PC-9 (cell line): ENCODE measurements at regions of chr10 and their contacts with region 1.

Region 1: DNA sequence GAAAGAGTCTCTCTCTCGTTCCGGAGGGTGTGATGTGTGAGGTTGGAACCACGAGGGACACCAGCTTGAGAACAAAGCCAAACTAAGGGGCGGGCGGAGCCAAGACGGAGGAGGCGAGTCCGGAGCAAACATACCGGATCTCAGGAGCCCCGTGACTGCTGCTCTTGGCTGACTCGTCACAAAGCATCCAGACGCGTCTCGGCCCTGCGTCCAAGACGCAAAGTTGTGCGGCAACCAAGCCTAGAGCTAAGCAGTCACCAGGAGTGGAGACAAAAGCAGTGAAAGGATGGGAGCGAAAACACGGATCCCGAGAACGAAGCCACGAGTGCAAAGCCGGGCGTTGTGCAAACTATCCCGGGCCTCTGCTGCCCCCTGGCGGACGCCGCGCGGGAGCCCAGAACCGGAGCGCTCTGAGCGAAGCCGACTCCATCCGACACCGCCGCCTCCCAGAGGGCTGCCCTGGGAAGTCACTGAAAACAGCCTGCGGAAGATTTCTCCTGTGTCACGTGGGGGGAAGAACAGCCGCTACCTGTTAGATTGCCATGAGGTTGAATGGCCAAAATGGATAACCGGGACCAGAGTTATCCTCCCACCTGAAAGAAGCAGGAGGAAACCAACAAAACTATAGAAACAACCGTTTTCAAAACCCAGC is 46.4 kb upstream of the TMEM72 start:
- DNase-seq: peak in 1 of 2 experiments; percentile 80
- H3K4me3 ChIP-seq: no peak overlapping the region
- H3K27ac ChIP-seq: no peak overlapping the region
- H3K4me1 ChIP-seq: no peaks in the 10 kb centered on the region
- H3K27me3 ChIP-seq: peaks cover 45% of the 10 kb centered on the region
- CTCF ChIP-seq: peak; percentile 94

Region 2: DNA sequence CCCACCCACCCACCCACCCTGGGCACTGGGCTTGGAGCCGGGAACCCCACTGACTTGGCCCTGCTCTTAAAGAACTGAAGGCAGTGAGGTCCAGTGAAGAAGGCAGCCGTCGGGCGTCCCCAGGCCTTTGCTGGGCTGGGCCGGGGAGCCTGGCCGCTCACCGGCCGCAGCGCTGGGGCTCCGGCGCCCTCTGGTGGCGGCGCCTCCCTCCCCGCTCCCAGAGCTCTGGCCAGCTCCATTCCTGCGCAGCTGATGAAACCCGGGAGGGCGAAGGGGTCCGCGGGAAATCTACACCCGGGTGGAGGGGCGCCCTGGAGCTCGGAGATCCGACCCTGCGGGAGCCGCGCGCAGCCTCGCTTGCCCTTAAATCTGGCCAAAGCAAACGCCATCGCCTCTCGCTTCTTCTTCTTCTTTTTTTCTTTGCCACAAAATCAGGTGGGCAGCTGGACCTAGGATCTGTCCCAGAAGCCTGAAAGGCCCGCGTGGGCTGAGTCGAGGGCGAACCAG is 478.2 kb before region 1 on chr10:
- CTCF ChIA-PET with region 1: no interaction called
- POLR2A ChIA-PET with region 1: no interaction called
- intact Hi-C with region 1: loop called (anchors 10 kb)
- DNase-seq: peak in 1 of 2 experiments; percentile 42
- H3K4me3 ChIP-seq: no peak overlapping the region
- H3K27ac ChIP-seq: no peak overlapping the region
- H3K4me1 ChIP-seq: no peaks in the 10 kb centered on the region
- H3K27me3 ChIP-seq: peaks cover 21% of the 10 kb centered on the region; the same call in 1 of the 2 replicates
- CTCF ChIP-seq: peak; percentile 78

Region 3: DNA sequence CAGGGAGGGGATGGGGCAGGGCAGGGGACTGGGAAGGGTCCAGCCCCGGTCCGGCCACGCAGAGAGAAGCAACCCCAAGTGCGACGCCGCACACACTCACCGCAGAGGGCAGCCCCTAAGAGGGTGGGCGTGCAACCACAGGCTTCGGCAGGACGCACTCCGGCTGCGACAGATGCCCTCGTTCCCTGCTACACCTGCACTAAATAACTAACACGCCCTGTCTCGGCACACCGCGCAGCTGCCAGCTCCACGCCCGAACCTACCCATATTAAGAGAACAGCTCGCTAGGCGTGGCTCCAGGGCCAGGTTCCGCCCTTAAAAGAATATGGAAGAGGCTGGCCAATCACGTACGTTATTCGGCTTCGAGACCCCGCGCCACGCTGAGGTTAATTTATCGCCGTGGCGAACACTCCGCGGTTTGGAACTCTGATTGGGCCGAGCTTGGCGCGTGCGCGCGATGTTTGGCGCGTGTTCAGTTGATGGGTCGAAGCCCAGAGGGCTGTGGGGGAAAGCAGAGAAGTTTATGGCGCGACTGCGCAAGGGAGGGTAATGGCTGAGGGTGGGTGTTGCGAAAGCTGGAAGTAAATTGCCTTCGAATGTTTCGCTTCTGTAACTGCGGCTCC is 359.6 kb after region 1 on chr10:
- CTCF ChIA-PET with region 1: no interaction called
- POLR2A ChIA-PET with region 1: no interaction called
- intact Hi-C with region 1: no loop called
- DNase-seq: no peak
- H3K4me3 ChIP-seq: no peak overlapping the region
- H3K27ac ChIP-seq: no peak overlapping the region
- H3K4me1 ChIP-seq: no peaks in the 10 kb centered on the region
- H3K27me3 ChIP-seq: 0 out of 2 replicates have a peak, but pooled peaks cover 8% of the 10 kb centered on the region
- CTCF ChIP-seq: no peak